HCT116 (cell line): ENCODE measurements at regions of chr1 and their contacts with region 1.

Region 1: DNA sequence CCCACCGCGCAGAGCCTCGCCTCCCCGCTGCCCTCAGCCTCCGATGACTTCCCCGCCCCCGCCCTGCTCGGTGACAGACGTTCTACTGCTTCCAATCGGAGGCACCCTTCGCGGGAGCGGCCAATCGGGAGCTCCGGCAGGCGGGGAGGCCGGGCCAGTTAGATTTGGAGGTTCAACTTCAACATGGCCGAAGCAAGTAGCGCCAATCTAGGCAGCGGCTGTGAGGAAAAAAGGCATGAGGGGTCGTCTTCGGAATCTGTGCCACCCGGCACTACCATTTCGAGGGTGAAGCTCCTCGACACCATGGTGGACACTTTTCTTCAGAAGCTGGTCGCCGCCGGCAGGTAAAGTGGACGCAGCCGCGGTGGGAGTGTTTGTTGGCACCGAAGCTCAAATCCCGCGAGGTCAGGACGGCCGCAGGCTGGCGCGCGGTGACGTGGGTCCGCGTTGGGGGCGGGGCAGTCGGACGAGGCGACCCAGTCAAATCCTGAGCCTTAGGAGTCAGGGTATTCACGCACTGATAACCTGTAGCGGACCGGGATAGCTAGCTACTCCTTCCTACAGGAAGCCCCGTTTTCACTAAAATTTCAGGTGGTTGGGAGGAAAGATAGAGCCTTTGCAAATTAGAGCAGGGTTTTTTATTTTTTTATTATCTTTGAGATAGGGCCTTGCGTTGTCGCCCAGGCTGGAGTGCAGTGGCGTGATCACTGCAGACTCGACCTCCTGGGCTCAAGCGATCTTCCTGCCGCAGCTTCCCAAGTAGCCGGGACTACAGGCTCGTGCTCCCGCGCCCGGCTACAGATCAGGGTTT is at the start of gene PMF1:
- DNase-seq: peak; percentile 91
- ATAC-seq: peak; percentile 95
- H3K4me3 ChIP-seq: peak within 1 kb of the TSS; percentile 85 to 96
- H3K27ac ChIP-seq: peak within 1 kb of the TSS; percentile 75
- H3K4me1 ChIP-seq: peaks cover 10 to 21% of the 10 kb centered on the region in 2 experiments
- H3K27me3 ChIP-seq: no peaks in the 10 kb centered on the region
- CTCF ChIP-seq: no peak
- POLR2A ChIP-seq: peak; percentile 78
- RAD21 ChIP-seq: no peak
- total RNA-seq, gene PMF1: 52.6 TPM

Region 2: DNA sequence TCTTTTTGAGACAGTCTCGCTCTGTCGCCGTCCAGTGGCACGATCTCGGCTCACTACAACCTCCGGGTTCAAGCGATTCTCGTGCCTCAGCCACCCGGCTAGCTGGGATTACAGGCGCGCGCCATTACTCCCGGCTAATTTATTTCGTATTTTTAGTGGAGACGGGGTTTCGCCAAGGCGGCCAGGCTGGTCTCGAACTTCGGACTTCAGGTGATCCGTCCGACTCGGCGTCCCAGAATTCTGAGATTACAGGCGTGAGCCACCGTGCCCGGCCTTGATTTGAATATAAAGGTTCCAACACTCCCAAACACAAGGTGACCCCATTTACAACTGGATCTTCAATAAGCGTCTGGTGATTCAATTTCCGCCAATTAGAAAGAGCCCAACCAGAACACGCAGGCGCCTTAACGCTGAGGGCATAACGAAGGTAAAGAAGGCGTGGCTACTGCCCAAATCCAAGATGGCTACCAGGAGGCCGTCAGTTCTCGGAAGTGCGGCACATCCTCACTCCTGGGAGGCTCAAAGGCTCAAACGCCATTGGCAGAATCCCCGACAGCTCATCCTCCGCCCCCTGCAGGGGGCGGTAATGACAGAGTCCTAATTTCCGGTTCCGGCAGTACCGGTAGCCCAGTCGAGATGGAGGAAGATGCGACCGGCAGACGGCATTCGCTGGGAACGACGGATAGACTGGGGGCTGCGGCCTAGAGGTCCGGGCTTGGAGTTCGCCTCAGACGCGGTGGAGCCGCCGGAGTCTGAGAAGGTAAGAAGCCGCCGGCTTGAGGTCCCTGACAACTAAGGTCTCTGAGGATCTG is 19.3 kb before region 1 on chr1 and contains the start of gene SLC25A44:
- CTCF ChIA-PET with region 1: interaction called, 3 read pairs
- POLR2A ChIA-PET with region 1: interaction called, 22 read pairs
- RAD21 ChIA-PET with region 1: no interaction called
- intact Hi-C with region 1: no loop called
- DNase-seq: peak; percentile 99
- ATAC-seq: peak; percentile 96
- H3K4me3 ChIP-seq: peak within 1 kb of the TSS; percentile 84 to 91
- H3K27ac ChIP-seq: peak within 1 kb of the TSS; percentile 85
- H3K4me1 ChIP-seq: peaks cover 8 to 17% of the 10 kb centered on the region in 2 experiments
- H3K27me3 ChIP-seq: no peaks in the 10 kb centered on the region
- CTCF ChIP-seq: peak in 2 of 3 experiments; percentile 12 to 44; a peak in 2 of 6 replicates
- POLR2A ChIP-seq: peak; percentile 48
- RAD21 ChIP-seq: no peak
- total RNA-seq, gene SLC25A44: 17.5 TPM

Region 3: GRCh38 chr1:156198831-156199349 is 14.1 kb before region 1 on chr1:
- CTCF ChIA-PET with region 1: interaction called, 3 read pairs
- POLR2A ChIA-PET with region 1: interaction called, 22 read pairs
- RAD21 ChIA-PET with region 1: no interaction called
- intact Hi-C with region 1: no loop called
- DNase-seq: no peak
- ATAC-seq: no peak
- H3K4me3 ChIP-seq: no peak overlapping the region
- H3K27ac ChIP-seq: no peak overlapping the region
- H3K4me1 ChIP-seq: peaks cover 3 to 15% of the 10 kb centered on the region in 2 experiments; a peak in 2 of 4 replicates
- H3K27me3 ChIP-seq: no peaks in the 10 kb centered on the region
- CTCF ChIP-seq: no peak
- POLR2A ChIP-seq: no peak
- RAD21 ChIP-seq: no peak